ENCODE measurements at regions of chr1 and their contacts with region 1.

Region 1: GRCh38 chr1:205658943-205659581 is 21.2 kb downstream of the SLC45A3 start:
- DNase-seq: peak; percentile 56 to 87
- ATAC-seq: peak; percentile 85 to 94
- H3K4me3 ChIP-seq: no peak overlapping the region
- H3K27ac ChIP-seq: no peak overlapping the region
- H3K4me1 ChIP-seq: no peaks in the 10 kb centered on the region
- CTCF ChIP-seq: peak; percentile 79
- EP300 ChIP-seq: no peak
- POLR2A ChIP-seq: no peak
- RAD21 ChIP-seq: peak; percentile 83 to 88

Region 2: GRCh38 chr1:205396967-205397616 is 262.0 kb before region 1 on chr1:
- CTCF ChIA-PET with region 1: no interaction called
- POLR2A ChIA-PET with region 1: no interaction called
- DNase-seq: peak; percentile 61 to 67
- ATAC-seq: peak; percentile 68 to 85; a peak in 5 of 6 replicates
- H3K4me3 ChIP-seq: no peak overlapping the region
- H3K27ac ChIP-seq: no peak overlapping the region
- H3K4me1 ChIP-seq: no peaks in the 10 kb centered on the region
- CTCF ChIP-seq: peak; percentile 71
- EP300 ChIP-seq: no peak
- POLR2A ChIP-seq: no peak
- RAD21 ChIP-seq: peak; percentile 81 to 89

Region 3: DNA sequence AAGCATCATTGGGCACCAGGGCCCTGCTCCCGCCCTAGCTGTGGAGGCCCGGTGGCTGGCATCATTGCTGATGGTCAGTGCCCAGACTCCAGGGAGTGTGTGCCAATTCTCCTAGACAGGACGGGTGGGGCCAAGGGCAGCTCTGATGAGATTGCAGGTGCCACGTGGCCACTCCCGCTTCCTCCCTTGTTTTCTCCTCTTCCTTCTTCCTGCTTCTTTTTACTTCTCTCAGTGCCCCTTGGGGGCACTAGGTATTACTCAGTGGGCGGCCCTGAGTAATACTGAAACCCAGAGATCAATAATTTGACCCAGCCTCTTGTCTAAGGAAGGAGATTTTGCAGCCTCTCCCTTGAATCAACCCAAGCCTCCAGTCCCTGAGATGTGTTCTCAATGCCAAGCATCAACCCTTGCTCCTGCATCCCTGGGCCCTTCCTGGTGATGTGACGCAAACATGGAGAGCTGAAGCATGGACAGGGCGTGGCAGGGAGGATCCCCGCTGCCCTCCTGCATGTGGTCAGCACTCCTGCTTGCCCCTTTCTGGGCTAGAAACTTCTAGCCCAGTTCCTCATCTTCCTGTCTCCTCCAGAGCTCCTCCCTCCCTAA is 122.2 kb before region 1 on chr1:
- CTCF ChIA-PET with region 1: interaction called, 154 read pairs
- POLR2A ChIA-PET with region 1: no interaction called
- DNase-seq: no peak
- ATAC-seq: peak in 1 of 2 experiments; percentile 15; a peak in 2 of 6 replicates
- H3K4me3 ChIP-seq: no peak overlapping the region
- H3K27ac ChIP-seq: no peak overlapping the region
- H3K4me1 ChIP-seq: peaks cover 7% of the 10 kb centered on the region; the same call in 1 of the 3 replicates
- CTCF ChIP-seq: no peak
- EP300 ChIP-seq: no peak
- POLR2A ChIP-seq: no peak
- RAD21 ChIP-seq: no peak

Region 4: DNA sequence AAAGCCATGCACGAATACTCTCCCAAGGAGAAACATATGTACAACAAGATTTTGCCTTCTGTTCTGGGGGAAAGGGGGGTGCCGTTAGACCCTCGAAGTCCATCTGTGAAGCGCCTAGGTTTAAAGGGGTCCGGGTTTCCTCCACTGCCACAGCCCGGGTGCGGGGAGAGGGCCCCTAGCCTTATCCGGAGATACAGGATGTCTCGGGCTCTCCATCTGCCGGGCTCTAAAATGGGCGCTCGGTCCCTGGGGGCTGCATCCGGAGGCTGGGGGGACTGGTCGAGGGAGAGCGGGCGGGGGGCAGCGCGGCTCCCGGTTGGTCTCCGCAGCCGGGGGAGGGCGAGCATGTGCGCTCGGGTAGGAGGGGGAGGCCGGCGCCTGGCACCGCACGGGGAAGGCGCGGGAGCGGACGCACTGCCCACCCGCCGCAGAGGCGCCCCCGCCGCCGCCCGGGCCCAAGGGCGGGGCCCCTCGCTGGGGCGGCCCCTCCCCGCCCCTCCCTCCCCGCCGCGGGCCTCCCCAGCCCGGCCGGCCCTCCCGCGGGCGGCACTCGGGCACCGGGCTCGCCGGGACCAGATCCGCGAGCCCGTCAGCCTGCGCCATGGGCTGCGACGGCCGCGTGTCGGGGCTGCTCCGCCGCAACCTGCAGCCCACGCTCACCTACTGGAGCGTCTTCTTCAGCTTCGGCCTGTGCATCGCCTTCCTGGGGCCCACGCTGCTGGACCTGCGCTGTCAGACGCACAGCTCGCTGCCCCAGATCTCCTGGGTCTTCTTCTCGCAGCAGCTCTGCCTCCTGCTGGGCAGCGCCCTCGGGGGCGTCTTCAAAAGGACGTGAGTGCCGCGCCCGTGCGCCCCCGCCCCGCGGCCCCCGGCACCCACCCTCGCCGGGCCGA is 90.3 kb before region 1 on chr1:
- CTCF ChIA-PET with region 1: interaction called, 13 read pairs
- POLR2A ChIA-PET with region 1: no interaction called
- DNase-seq: no peak
- ATAC-seq: peak; percentile 25 to 50; a peak in 3 of 6 replicates
- H3K4me3 ChIP-seq: peak overlapping the region; percentile 46
- H3K27ac ChIP-seq: peak overlapping the region in 1 of 2 experiments; percentile 56; a peak in 3 of 6 replicates
- H3K4me1 ChIP-seq: peaks cover 5% of the 10 kb centered on the region; the same call in 1 of the 3 replicates
- CTCF ChIP-seq: no peak
- EP300 ChIP-seq: no peak
- POLR2A ChIP-seq: no peak
- RAD21 ChIP-seq: no peak

Region 5: DNA sequence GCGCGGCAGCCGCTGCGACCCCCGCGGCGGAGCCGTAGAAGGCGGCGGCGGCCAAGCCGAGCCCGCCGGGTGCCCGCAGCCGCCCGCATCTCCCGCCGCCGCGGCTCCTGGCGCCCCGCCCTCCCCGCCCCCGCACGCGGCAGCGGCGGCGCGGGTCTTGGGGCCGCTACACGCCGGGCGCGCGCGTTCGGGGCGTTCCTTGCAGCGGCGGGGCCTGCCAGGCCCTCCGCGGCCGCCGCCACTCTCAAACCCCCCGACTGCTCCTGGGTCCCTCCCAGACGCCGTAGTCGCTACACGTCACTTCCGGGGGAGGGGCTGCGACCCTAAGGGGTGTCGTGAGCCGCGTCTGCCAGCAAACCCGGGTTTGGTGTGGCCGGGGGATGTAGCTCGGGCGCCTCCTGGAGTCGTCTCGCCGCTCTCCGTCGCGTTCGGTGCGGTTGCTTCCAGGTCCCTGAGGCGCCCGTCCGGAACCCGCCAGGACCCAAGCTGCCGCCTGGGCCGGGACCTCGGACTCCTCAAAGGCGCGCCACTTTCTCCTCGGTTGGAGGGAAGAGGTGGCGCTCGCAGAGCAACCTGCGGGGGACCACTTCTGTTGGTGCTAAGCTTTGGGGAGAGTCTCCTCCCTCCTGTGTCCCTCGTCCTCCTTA is 27.2 kb before region 1 on chr1 and contains the start of gene ELK4:
- CTCF ChIA-PET with region 1: interaction called, 198 read pairs
- POLR2A ChIA-PET with region 1: interaction called, 10 read pairs
- DNase-seq: peak; percentile 94 to 98
- ATAC-seq: peak; percentile 91 to 94
- H3K4me3 ChIP-seq: peak within 1 kb of the TSS; percentile 91
- H3K27ac ChIP-seq: peak within 1 kb of the TSS; percentile 99
- H3K4me1 ChIP-seq: peaks cover 15% of the 10 kb centered on the region; the same call in 2 of the 3 replicates
- CTCF ChIP-seq: peak; percentile 57
- EP300 ChIP-seq: no peak
- POLR2A ChIP-seq: peak; percentile 94
- RAD21 ChIP-seq: peak; percentile 76 to 79
- polyA plus RNA-seq, gene ELK4: 11.9 and 12.7 TPM in 2 replicates

Region 6: GRCh38 chr1:205693421-205693991 is 34.4 kb after region 1 on chr1:
- CTCF ChIA-PET with region 1: interaction called, 55 read pairs
- POLR2A ChIA-PET with region 1: no interaction called
- DNase-seq: no peak
- ATAC-seq: no peak
- H3K4me3 ChIP-seq: no peak overlapping the region
- H3K27ac ChIP-seq: no peak overlapping the region
- H3K4me1 ChIP-seq: 0 out of 3 replicates have a peak, but pooled peaks cover 3% of the 10 kb centered on the region
- CTCF ChIP-seq: no peak
- EP300 ChIP-seq: no peak
- POLR2A ChIP-seq: no peak
- RAD21 ChIP-seq: no peak

Region 7: DNA sequence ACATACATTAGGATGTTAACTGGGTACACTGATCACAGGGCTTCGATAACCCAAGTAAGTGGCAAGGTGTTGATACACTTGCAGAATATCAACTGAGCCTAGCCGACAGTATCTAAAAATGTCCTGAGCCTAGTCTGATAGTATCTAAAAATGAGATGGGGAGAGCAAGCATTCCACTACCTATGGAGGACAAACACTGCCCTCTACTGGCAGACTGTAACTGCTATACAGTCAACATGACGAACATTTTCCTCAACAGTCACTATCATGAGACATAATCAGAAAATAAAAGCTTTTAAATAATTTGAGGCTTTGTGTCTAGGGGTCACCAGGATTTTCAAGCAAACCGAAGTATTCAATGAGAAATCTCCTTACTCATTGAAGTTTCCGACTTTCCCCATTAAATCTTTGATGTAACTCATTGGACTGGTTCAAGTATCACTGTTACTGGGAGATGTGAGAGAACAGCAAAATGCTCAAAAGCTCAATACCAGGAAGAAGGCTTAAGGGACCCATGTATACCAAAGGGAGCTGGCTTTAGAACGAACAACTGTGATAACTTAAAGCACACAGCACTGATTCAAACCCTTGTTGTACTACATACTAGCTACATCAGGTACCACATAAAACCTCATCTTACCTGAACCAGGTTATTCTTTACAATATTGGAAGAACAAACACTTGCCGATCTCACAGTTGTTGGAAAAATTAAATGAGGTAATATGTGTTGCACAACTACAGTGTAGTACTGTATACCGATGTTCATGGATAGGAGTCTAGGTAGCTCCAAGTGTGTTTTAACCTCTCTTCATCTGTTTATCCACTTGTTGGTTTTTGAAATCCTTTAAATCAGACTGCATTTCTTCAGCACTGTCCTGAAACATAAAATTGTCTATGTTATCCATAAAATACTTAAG is 52.3 kb after region 1 on chr1:
- CTCF ChIA-PET with region 1: interaction called, 230 read pairs
- POLR2A ChIA-PET with region 1: no interaction called
- DNase-seq: peak; percentile 59 to 80
- ATAC-seq: peak; percentile 89 to 92
- H3K4me3 ChIP-seq: no peak overlapping the region
- H3K27ac ChIP-seq: no peak overlapping the region
- H3K4me1 ChIP-seq: peaks cover 10% of the 10 kb centered on the region; the same call in 2 of the 3 replicates
- CTCF ChIP-seq: peak; percentile 91
- EP300 ChIP-seq: no peak
- POLR2A ChIP-seq: no peak
- RAD21 ChIP-seq: peak; percentile 66 to 78

Region 8: DNA sequence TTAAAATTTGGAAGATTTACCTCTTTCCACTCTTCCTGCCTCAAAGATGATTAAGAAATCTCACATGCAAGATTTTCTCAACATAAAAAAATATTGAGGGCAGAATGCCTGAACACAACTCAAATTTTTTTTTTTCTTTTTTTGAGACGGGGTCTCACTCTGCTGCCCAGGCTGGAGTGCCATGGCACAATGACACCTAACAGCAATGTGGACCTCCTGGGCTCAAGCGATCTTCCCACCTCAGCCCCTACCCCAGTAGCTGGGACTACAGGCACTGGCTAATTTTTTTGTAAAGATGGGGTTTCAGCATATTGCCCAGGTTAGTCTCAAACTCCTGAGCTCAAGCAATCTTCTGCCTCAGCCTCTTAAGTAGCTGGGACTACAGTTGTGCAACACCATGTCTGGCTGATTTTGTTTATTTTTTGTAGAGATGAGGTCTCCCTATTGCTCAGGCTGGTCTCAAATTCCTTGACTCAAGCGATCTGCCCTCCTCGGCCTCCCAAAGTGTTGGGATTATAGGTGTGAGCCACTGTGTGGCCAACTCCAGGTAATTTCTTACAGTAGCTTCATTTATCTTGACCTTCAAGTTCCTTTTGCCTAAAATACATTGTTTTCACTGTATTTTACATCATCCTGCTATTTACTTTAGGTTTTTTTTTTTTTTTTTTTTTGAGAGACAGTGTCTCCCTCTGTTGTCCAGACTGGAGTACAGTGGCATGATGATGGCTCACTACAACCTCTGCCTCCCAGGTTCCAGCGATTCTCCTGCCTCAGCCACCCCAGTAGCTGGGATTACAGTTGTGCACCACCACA is 80.5 kb after region 1 on chr1:
- CTCF ChIA-PET with region 1: interaction called, 23 read pairs
- POLR2A ChIA-PET with region 1: no interaction called
- DNase-seq: peak in 1 of 2 experiments; percentile 53
- ATAC-seq: peak; percentile 55 to 69; a peak in 5 of 6 replicates
- H3K4me3 ChIP-seq: no peak overlapping the region
- H3K27ac ChIP-seq: 0 out of 6 replicates have a peak overlapping the region, but pooled peaks of 1 of the 2 experiments have one; percentile 10
- H3K4me1 ChIP-seq: peaks cover 39% of the 10 kb centered on the region
- CTCF ChIP-seq: peak; percentile 17; the same call in 1 of the 3 replicates
- EP300 ChIP-seq: no peak
- POLR2A ChIP-seq: no peak
- RAD21 ChIP-seq: no peak

Region 9: DNA sequence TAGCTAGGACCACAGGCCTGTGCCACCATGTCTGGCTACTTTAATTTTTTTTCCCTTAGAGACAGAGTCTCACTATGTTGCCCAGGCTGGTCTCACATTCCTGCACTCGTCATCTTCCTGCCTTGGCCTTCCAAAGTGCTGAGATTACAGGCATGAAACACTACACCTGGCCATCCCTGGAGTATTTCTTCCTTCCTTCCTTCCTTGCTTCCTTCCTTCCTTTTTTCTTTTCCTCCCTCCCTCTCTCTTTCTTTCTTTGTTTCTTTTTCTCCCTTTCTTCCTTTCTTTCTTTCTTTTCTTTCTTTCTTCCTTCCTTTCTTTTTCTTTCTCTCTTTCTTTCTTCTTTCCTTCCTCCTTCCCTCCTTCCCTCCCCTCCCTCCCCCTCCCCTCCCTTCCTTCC is 237.3 kb after region 1 on chr1:
- CTCF ChIA-PET with region 1: no interaction called
- POLR2A ChIA-PET with region 1: no interaction called
- DNase-seq: no peak
- ATAC-seq: no peak
- H3K4me3 ChIP-seq: no peak overlapping the region
- H3K27ac ChIP-seq: no peak overlapping the region
- H3K4me1 ChIP-seq: no peaks in the 10 kb centered on the region
- CTCF ChIP-seq: no peak
- EP300 ChIP-seq: no peak
- POLR2A ChIP-seq: no peak
- RAD21 ChIP-seq: no peak

Region 10: GRCh38 chr1:206059355-206059915 is 400.4 kb after region 1 on chr1:
- CTCF ChIA-PET with region 1: no interaction called
- POLR2A ChIA-PET with region 1: no interaction called
- DNase-seq: no peak
- ATAC-seq: no peak
- H3K4me3 ChIP-seq: no peak overlapping the region
- H3K27ac ChIP-seq: no peak overlapping the region
- H3K4me1 ChIP-seq: no peaks in the 10 kb centered on the region
- CTCF ChIP-seq: no peak
- EP300 ChIP-seq: no peak
- POLR2A ChIP-seq: no peak
- RAD21 ChIP-seq: no peak

Measured in A549 (cell line).